Calu3 (cell line): ENCODE measurements at regions of chrX and their contacts with region 1.

Region 1: DNA sequence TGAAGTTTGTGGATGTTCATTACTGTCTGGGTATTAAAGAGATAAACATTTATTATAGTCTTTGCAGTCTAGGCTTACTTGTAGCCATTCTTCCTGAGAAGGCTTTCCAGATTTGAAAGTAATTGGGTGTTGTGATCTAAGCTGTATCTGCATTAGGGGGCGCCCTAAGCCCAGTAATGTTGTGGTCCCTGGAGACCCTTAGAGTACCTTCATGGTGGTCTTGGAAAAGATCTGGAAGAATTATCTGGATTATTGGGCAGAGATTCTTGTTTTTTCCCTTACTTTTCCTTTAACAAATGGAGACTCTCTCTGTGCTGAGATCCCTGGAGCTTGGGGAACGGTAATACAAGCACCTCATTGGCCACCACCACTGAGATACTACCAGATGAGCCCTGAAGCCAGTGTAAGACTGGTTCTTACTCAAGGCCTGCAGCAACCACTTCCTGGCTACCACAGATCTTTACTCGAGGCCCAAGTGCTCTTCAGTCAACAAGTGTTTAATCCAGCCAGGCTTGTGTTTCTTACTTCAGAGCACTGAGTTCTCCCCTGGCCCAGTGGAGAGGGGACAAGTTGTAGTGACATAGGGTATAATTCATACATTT is 63.1 kb downstream of the RTL3 start:
- DNase-seq: no peak
- H3K4me3 Mint-ChIP-seq: no peak overlapping the region
- H3K27ac Mint-ChIP-seq: no peak overlapping the region
- H3K4me1 Mint-ChIP-seq: no peaks in the 10 kb centered on the region
- H3K27me3 Mint-ChIP-seq: no peaks in the 10 kb centered on the region
- CTCF ChIP-seq: no peak

Region 2: GRCh38 chrX:78708262-78708661 is 112.3 kb after region 1 on chrX:
- CTCF ChIA-PET with region 1: no interaction called
- intact Hi-C with region 1: loop called (anchors 10 kb)
- DNase-seq: peak; percentile 16
- H3K4me3 Mint-ChIP-seq: no peak overlapping the region
- H3K27ac Mint-ChIP-seq: no peak overlapping the region
- H3K4me1 Mint-ChIP-seq: no peaks in the 10 kb centered on the region
- H3K27me3 Mint-ChIP-seq: no peaks in the 10 kb centered on the region
- CTCF ChIP-seq: no peak

Region 3: DNA sequence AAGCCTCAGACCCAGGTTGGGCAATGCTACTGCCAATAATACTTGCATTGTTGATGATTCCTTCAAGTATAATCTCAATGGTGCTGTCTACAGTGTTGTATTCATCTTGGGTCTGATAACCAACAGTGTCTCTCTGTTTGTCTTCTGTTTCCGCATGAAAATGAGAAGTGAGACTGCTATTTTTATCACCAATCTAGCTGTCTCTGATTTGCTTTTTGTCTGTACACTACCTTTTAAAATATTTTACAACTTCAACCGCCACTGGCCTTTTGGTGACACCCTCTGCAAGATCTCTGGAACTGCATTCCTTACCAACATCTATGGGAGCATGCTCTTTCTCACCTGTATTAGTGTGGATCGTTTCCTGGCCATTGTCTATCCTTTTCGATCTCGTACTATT is 158.9 kb after region 1 on chrX:
- CTCF ChIA-PET with region 1: no interaction called
- intact Hi-C with region 1: no loop called
- DNase-seq: no peak
- H3K4me3 Mint-ChIP-seq: no peak overlapping the region
- H3K27ac Mint-ChIP-seq: no peak overlapping the region
- H3K4me1 Mint-ChIP-seq: no peaks in the 10 kb centered on the region
- H3K27me3 Mint-ChIP-seq: no peaks in the 10 kb centered on the region
- CTCF ChIP-seq: no peak